Activated CD4-positive, alpha-beta T cell treated with anti-CD3 and anti-CD28 coated beads for 36 hours (primary cell): ENCODE measurements at regions of chr22 and their contacts with region 1.

Region 1: GRCh38 chr22:36301384-36301828 is 48.5 kb downstream of the APOL1 start:
- DNase-seq: peak; percentile 90
- ATAC-seq: peak; percentile 82
- H3K4me3 Mint-ChIP-seq: no peak overlapping the region
- H3K27ac Mint-ChIP-seq: peak overlapping the region; percentile 72
- H3K4me1 Mint-ChIP-seq: peaks cover 7% of the 10 kb centered on the region
- H3K27me3 Mint-ChIP-seq: no peaks in the 10 kb centered on the region

Region 2: GRCh38 chr22:36097880-36098279 is 203.5 kb before region 1 on chr22:
- CTCF ChIA-PET with region 1: no interaction called
- POLR2A ChIA-PET with region 1: no interaction called
- intact Hi-C with region 1: no loop called
- DNase-seq: no peak
- ATAC-seq: no peak
- H3K4me3 Mint-ChIP-seq: no peak overlapping the region
- H3K27ac Mint-ChIP-seq: no peak overlapping the region
- H3K4me1 Mint-ChIP-seq: no peaks in the 10 kb centered on the region
- H3K27me3 Mint-ChIP-seq: no peaks in the 10 kb centered on the region

Region 3: GRCh38 chr22:36136475-36136874 is 164.9 kb before region 1 on chr22:
- CTCF ChIA-PET with region 1: no interaction called
- POLR2A ChIA-PET with region 1: no interaction called
- intact Hi-C with region 1: no loop called
- DNase-seq: no peak
- ATAC-seq: no peak
- H3K4me3 Mint-ChIP-seq: no peak overlapping the region
- H3K27ac Mint-ChIP-seq: no peak overlapping the region
- H3K4me1 Mint-ChIP-seq: peaks cover 17% of the 10 kb centered on the region
- H3K27me3 Mint-ChIP-seq: no peaks in the 10 kb centered on the region

Region 4: GRCh38 chr22:36286471-36287224 is 14.8 kb before region 1 on chr22:
- CTCF ChIA-PET with region 1: interaction called, 44 read pairs
- POLR2A ChIA-PET with region 1: no interaction called
- intact Hi-C with region 1: no loop called
- DNase-seq: peak; percentile 83
- ATAC-seq: peak; percentile 89
- H3K4me3 Mint-ChIP-seq: no peak overlapping the region
- H3K27ac Mint-ChIP-seq: peak overlapping the region; percentile 67
- H3K4me1 Mint-ChIP-seq: peaks cover 18% of the 10 kb centered on the region
- H3K27me3 Mint-ChIP-seq: no peaks in the 10 kb centered on the region

Region 5: GRCh38 chr22:36454916-36455570 is 153.6 kb after region 1 on chr22:
- CTCF ChIA-PET with region 1: interaction called, 10 read pairs
- POLR2A ChIA-PET with region 1: no interaction called
- intact Hi-C with region 1: no loop called
- DNase-seq: peak; percentile 98
- ATAC-seq: peak; percentile 82
- H3K4me3 Mint-ChIP-seq: peak overlapping the region; percentile 71
- H3K27ac Mint-ChIP-seq: peak overlapping the region; percentile 67
- H3K4me1 Mint-ChIP-seq: peaks cover 44% of the 10 kb centered on the region
- H3K27me3 Mint-ChIP-seq: no peaks in the 10 kb centered on the region

Region 6: DNA sequence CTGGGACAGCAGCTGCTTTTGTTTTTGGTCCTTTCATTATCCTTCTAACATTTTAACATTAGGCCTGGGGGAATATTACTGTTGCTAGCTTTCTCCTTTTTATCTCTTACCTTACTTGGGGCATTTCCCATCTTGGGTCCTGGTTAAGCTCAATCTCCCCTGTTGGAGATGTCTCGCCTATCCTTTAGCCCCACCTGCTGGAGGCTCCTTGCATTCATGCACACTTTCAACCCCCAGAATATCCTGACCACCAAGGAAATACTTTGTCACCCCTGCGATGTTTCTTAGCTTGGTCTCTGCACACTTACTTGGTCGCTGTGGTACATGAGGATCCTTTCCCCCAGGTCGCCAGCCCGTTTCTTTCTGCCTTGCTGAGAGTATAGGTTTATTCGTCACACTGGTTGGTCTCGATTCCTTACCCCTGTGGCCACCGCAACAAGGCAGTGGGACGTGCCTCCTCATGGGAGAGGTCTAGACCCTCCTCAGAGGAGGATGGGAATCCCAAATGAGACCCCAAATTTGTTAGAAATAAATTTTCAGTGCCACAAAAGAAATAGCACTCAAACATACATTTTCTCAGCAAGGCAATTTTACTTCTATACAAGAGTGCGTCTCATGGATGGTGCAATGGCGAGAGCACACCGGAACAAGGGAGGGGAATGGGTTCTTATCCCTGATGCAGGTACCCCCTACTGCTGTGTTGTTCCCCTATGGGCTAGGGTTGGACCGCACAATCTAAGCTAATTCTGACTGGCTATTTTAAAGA is 185.4 kb after region 1 on chr22:
- CTCF ChIA-PET with region 1: interaction called, 23 read pairs
- POLR2A ChIA-PET with region 1: interaction called, 4 read pairs
- intact Hi-C with region 1: loop called (anchors 1 kb)
- DNase-seq: peak; percentile 81
- ATAC-seq: no peak
- H3K4me3 Mint-ChIP-seq: no peak overlapping the region
- H3K27ac Mint-ChIP-seq: no peak overlapping the region
- H3K4me1 Mint-ChIP-seq: peaks cover 7% of the 10 kb centered on the region
- H3K27me3 Mint-ChIP-seq: no peaks in the 10 kb centered on the region